Adrenal gland (tissue), 19 donors: ENCODE measurements at regions of chr4 and their contacts with region 1.

Region 1: DNA sequence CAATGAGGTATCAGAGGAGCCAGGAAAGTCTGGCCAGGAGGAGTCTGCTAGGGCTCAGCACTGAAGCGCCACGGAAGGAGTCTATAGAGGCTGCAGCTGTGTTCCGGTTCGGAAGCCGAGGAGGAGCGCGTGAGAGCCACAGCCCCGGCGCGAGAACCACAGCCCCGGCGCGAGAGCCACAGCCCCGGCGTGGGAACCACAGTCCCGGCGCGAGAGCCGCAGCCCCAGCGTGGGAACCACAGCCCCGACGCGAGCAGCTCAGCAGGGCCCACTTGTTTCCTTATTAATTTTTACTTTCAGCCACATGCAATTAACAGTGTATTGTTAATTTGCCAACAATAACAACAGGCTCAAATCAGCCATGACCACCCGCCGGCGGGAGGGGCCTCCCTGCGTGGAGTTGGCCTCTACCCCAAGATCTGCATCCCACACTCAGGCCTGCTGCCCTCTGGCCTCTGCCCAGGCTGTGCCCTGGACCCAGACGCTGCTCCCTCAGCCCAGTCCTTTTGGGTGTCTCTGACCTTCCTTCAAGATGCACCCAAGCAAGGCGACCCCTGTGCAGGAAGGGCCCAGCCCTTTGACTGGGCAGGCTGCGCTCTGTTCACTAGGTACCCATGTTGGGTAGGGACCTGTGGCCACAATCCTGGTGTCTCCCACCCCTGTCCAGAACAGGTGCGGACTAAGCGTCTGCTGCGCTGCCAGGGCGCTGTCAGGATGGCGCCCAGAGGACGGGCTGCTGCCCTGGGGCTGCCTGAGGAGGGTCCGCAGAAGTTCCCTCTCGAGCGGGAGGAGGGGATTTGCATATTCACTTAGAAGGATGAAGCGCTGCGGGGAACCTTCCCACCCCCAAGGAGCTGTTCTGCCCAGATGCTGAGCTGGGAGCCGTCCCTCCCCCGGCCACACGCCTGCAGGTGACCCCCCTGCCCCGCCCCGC is 113.8 kb downstream of the ADRA2C start:
- DNase-seq: peak in 1 of 7 donors; percentile 9
- H3K4me3 ChIP-seq: no peak overlapping the region
- H3K27ac ChIP-seq: no peak overlapping the region
- H3K4me1 ChIP-seq: no peaks in the 10 kb centered on the region
- H3K27me3 ChIP-seq: peaks cover 14% of the 10 kb centered on the region
- CTCF ChIP-seq: no peak
- POLR2A ChIP-seq: no peak

Region 2: DNA sequence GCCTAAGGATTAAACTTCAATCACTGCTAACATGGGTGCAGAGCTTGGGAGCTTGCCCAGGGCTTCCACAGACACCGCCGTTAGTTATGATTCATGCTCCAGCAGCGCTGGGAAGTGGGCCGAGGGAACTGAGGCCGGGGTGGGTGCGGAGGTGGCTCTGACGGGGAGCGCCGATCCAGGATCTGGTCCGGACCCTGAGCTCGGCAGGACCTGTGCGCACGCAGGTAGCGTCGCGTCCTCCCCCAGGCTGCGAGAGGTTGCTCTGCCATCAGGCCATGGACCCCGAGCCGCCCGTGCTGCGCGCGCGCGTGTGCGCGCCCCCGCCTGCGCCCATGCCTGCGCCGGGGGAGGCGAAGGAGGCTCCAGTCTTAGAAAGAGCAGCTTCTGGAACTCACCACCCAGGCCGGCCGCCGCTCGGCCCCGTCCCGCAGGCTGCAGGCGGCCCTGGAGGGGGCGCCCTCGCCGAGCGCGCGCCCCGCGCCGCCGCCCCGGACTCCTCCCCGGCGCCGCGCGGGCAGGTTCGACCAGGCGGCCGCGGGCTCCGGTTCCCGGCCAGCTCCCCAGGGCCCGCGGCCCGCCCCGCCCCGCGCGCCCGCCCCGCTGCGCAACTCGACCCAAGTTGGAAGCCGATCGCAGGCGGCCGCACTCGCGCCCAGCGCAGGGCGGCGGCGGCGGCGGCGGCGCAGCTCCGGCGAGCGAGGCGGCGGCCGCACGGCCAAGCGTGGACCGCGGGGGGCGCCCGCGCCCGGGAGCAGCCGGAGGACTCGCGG is 114.5 kb before region 1 on chr4:
- intact Hi-C with region 1: loop called in 1 of 2 experiments (anchors 5 kb)
- DNase-seq: peak in 5 of 7 donors; percentile 27 to 47 (median 40)
- H3K4me3 ChIP-seq: peak overlapping the region in 1 of 4 donors; percentile 39
- H3K27ac ChIP-seq: peak overlapping the region in 1 of 5 donors; percentile 68
- H3K4me1 ChIP-seq: peaks cover 0 to 3% of the 10 kb centered on the region in 2 donors
- H3K27me3 ChIP-seq: peaks cover 22% of the 10 kb centered on the region
- CTCF ChIP-seq: peak in 1 of 6 experiments; percentile 22
- POLR2A ChIP-seq: no peak